BJ (cell line): ENCODE measurements at regions of chr19 and their contacts with region 1.

Region 1: DNA sequence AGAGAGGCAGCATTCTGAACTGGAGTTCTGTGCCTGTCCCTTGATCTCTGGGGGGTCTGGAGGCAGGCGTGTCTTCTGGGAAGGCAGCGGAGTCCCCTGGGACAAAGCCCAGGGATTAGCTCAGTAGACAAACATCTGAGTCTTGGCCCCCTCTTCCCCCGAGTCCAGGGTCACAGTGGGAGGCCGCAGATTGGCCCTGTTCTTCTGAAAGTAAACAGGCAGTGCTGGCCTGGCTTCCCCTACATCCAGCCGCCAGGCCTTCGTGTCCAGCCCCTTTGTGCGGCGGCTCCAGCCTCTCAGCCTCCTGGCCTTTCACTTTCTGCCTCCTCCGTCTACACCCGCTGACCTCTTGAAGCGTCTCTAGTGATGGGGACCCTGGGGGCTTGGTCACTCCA is 989 bp downstream of the NFILZ start:
- DNase-seq: no peak
- H3K4me3 ChIP-seq: no peak overlapping the region
- H3K27me3 ChIP-seq: no peaks in the 10 kb centered on the region
- CTCF ChIP-seq: no peak

Region 2: GRCh38 chr19:8615813-8616596 is 15.4 kb before region 1 on chr19:
- CTCF ChIA-PET with region 1: interaction called, 21 read pairs
- POLR2A ChIA-PET with region 1: no interaction called
- DNase-seq: no peak
- H3K4me3 ChIP-seq: no peak overlapping the region
- H3K27me3 ChIP-seq: no peaks in the 10 kb centered on the region
- CTCF ChIP-seq: peak; percentile 92

Region 3: DNA sequence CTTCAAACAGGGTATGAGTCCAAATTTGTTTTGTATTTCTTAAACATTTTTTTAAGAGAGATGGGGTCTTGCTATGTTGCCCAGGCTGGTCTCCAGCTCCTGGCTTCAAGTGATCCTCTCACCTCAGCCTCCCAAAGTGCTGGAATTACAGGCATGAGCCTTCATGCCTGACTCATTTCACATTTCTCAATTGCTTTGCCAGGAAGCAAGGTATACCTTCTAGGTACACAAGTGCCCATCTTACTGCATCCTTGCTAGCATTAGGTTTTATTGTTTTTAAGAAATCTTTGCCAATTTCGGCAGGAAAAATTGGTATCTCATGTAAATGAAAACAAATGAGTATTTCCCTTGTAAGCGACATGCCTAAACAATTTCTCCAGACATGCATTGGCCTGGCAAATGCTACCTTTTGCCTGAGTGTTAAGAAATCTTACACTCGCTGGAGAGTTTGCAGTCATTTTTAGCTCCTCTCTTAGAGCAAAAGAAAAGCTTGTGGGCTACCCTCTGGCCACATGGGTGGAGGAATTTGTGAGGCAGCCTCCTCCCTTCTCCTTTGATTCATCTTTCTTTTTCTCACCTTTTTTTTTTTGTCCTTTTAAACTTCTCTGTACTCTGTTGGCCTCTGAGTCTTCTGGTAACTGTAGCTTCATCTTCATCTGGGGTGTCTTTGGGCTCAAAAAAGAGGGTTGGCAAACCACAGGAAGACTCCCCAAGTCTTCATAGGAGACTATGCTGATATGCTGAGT is 34.2 kb after region 1 on chr19:
- CTCF ChIA-PET with region 1: no interaction called
- POLR2A ChIA-PET with region 1: no interaction called
- DNase-seq: no peak
- H3K4me3 ChIP-seq: no peak overlapping the region
- H3K27me3 ChIP-seq: no peaks in the 10 kb centered on the region
- CTCF ChIP-seq: no peak

Region 4: DNA sequence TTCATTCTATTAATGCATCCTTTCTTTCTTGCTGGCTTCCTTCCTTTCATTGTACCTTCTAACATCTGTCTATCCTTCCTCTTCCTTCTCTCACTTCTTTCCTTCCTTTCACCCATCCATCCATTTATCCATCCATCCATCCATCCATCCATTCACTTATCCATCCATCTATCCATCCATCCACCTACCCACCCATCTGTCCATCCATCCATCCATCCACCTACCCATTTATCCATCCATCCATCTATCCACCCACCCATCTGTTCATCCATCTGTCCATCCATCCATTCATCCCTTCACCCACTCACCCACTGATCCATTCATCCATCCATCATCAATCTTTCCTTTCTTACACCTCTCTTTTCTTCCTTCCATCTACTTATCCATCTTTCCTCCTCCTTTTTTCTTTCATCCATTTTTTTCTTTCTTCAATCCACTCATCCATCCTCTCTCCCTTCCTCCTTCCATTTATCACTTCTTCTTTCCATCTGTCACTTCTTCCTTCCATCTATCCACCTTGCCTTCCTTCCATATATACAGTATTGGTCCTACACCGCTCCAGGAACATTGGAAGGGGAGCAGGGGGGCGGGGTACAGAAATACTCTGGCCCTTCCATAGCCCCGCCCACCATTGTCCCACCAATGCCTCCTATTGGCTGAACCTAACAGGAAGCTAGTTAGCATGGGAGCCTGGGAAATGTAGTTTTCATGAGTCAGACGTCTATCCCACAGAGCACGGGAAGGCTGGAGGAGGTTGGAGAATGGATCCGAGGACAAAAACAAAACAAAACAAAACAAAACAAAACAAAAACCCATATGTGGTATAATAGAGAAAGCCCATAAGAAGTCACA is 246.7 kb after region 1 on chr19:
- CTCF ChIA-PET with region 1: no interaction called
- POLR2A ChIA-PET with region 1: no interaction called
- DNase-seq: no peak
- H3K4me3 ChIP-seq: no peak overlapping the region
- H3K27me3 ChIP-seq: no peaks in the 10 kb centered on the region
- CTCF ChIP-seq: no peak